Body of pancreas (tissue), 4 donors: ENCODE measurements at regions of chr12 and their contacts with region 1.

Region 1: GRCh38 chr12:111753144-111753881 is 13.4 kb upstream of the ALDH2 start:
- DNase-seq: peak; percentile 80 to 83 (median 82)
- ATAC-seq: peak; percentile 88
- H3K4me3 ChIP-seq: no peak overlapping the region
- H3K27ac ChIP-seq: no peak overlapping the region
- H3K4me1 ChIP-seq: peaks cover 40% of the 10 kb centered on the region
- H3K27me3 ChIP-seq: no peaks in the 10 kb centered on the region
- CTCF ChIP-seq: peak; percentile 75 to 95 (median 92)
- POLR2A ChIP-seq: no peak

Region 2: DNA sequence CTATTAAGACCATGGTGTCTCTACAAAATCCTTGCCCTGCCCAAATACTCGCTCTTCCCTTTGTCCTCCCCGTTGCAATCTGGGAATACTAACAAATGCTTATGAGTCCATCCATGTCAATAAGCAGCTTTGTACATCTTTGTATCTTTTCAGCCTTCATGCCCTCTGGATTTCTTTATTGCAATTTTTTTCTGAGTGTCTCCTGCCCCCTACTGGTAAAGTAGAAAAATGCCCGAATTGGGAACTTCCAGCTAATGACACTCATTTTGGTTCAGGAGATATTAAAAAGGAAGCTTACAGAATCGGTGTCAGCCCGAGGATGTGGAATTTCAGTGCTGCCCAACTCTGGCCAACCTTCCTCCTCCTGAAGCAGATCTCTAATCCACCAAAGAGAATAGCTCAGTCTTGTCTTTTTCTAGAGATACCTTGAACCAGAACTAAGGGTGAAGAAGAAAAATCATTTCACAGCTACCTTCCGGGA is 301.6 kb before region 1 on chr12:
- intact Hi-C with region 1: no loop called
- DNase-seq: peak in 1 of 4 donors; percentile 8
- ATAC-seq: peak; percentile 41
- H3K4me3 ChIP-seq: no peak overlapping the region
- H3K27ac ChIP-seq: no peak overlapping the region
- H3K4me1 ChIP-seq: peaks cover 17% of the 10 kb centered on the region
- H3K27me3 ChIP-seq: no peaks in the 10 kb centered on the region
- CTCF ChIP-seq: peak; percentile 58 to 87 (median 80)
- POLR2A ChIP-seq: no peak

Region 3: GRCh38 chr12:111812881-111813741 is 59.8 kb after region 1 on chr12:
- intact Hi-C with region 1: loop called (anchors 10 kb)
- DNase-seq: peak; percentile 80 to 86 (median 84)
- ATAC-seq: peak; percentile 96
- H3K4me3 ChIP-seq: no peak overlapping the region
- H3K27ac ChIP-seq: no peak overlapping the region
- H3K4me1 ChIP-seq: no peaks in the 10 kb centered on the region
- H3K27me3 ChIP-seq: no peaks in the 10 kb centered on the region
- CTCF ChIP-seq: peak; percentile 52 to 88 (median 84)
- POLR2A ChIP-seq: no peak